Dorsolateral prefrontal cortex (tissue), 120 donors: ENCODE measurements at regions of chr7 and their contacts with region 1.

Region 1: GRCh38 chr7:105876091-105876963 is at the start of gene ATXN7L1:
- DNase-seq: peak; percentile 88 to 96 (median 92)
- H3K4me3 ChIP-seq: peak within 1 kb of the TSS; percentile 66 to 94 (median 85)
- H3K27ac ChIP-seq: peak within 1 kb of the TSS in 58 of 59 donors; percentile 19 to 94 (median 86)
- H3K27me3 ChIP-seq: no peaks in the 10 kb centered on the region
- CTCF ChIP-seq: peak in 46 of 56 donors; percentile 4 to 80 (median 48)
- total RNA-seq, gene ATXN7L1: 17.9 to 47.7 (median 29.0) TPM

Region 2: DNA sequence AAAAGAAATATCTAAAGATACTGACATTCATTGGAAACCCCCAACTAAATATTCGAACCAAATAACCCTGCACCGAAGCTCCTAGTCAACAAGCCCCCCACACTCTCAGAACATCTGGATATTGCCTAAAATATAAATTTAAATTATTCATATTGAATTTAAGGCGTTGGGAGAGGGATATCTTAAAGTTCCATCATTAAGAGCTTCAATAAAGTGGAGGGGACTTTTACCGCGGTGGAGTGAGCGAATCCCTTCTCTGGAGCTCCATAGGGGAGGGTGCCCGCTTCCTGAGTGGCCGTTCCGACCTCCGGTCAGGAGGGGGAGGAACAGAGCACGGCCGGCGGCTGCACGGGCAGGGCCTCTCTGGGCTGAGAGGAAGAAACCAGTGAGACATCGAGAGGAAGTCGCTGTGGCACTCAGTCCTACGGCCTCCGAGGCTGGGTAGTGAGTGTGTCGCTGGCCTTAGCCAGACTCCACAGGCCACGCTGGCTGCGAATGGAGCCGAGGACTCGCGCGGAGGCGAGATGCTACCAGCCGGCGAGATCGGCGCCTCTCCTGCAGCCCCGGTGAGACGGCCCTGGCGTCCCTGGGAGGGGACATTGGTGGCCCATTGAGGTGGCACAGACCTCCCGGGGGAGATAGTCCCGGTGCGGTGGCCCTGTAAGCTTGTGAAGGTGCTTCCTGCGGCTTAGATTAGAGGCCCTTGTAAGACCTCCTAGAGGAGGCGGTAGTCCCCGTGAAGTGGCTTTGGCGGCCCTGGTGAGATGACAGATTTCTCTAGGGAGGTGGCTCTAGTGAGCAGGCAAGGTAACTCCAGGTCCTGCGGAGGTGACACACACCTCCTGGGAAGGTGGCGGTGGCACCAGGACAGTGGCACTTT is 344.3 kb before region 1 on chr7 and contains the start of gene RINT1:
- intact Hi-C with region 1: no loop called
- DNase-seq: peak; percentile 76 to 94 (median 92)
- H3K4me3 ChIP-seq: peak within 1 kb of the TSS; percentile 67 to 100 (median 96)
- H3K27ac ChIP-seq: peak within 1 kb of the TSS in 54 of 59 donors; percentile 2 to 95 (median 82)
- H3K27me3 ChIP-seq: no peaks in the 10 kb centered on the region
- CTCF ChIP-seq: peak; percentile 24 to 97 (median 88)
- total RNA-seq, gene RINT1: 14.1 to 34.8 (median 22.7) TPM

Region 3: GRCh38 chr7:105652359-105652993 is 223.9 kb before region 1 on chr7:
- intact Hi-C with region 1: loop called (anchors 5 to 10 kb)
- DNase-seq: peak; percentile 78 to 86 (median 84)
- H3K4me3 ChIP-seq: no peak overlapping the region
- H3K27ac ChIP-seq: no peak overlapping the region
- H3K27me3 ChIP-seq: no peaks in the 10 kb centered on the region
- CTCF ChIP-seq: peak; percentile 51 to 96 (median 86)

Region 4: GRCh38 chr7:105759670-105760550 is 116.4 kb before region 1 on chr7:
- intact Hi-C with region 1: loop called in 1 of 2 experiments (anchors 5 kb)
- DNase-seq: peak in 6 of 10 donors; percentile 32 to 71 (median 49)
- H3K4me3 ChIP-seq: no peak overlapping the region
- H3K27ac ChIP-seq: no peak overlapping the region
- H3K27me3 ChIP-seq: no peaks in the 10 kb centered on the region
- CTCF ChIP-seq: peak in 55 of 56 donors; percentile 41 to 83 (median 66)

Region 5: DNA sequence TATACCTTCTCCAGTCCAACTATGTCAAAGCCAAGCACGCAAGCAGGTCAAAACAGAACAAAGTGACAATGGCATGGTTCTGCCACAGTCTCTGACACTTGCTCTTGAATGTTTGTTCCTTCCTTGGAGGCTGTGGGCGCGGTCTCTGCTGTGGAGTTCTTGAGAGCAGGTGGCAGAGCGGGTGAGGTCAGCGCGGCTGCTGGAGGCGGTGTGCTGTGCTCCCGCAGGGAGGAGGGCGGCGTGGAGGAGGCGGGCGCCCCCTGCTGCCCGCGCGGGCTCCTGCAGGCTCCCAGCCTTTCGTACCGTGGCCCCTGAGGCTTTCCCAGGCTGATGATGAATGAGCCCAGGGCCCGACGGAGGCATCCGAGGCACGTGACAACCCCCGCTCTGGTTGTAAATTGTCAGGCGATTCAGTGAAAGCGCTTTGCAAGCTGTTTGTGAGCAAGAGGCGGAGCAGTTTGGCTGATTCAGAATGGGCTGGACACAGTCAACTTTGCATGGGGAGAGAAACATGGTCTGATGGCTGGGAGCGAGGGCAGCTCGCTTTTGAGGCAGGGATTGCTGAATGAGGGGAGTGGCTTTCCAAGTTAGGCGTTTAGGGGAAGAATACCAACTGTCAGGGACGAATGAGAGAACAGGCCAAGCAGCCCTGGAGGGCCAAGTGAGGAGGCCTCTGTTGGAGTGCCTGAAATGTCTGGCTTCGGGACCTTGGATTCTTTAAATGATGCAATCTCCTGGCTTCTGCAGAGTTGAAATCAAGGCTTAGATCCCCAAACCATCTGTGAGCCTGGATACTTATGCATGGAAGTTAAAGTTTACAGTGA is 133.3 kb after region 1 on chr7:
- intact Hi-C with region 1: loop called (anchors 5 to 10 kb)
- DNase-seq: peak; percentile 72 to 89 (median 82)
- H3K4me3 ChIP-seq: peak overlapping the region in 37 of 59 donors; percentile 1 to 52 (median 29)
- H3K27ac ChIP-seq: peak overlapping the region in 2 of 59 donors; percentile 26 to 34
- H3K27me3 ChIP-seq: no peaks in the 10 kb centered on the region
- CTCF ChIP-seq: peak; percentile 71 to 99 (median 96)

Region 6: DNA sequence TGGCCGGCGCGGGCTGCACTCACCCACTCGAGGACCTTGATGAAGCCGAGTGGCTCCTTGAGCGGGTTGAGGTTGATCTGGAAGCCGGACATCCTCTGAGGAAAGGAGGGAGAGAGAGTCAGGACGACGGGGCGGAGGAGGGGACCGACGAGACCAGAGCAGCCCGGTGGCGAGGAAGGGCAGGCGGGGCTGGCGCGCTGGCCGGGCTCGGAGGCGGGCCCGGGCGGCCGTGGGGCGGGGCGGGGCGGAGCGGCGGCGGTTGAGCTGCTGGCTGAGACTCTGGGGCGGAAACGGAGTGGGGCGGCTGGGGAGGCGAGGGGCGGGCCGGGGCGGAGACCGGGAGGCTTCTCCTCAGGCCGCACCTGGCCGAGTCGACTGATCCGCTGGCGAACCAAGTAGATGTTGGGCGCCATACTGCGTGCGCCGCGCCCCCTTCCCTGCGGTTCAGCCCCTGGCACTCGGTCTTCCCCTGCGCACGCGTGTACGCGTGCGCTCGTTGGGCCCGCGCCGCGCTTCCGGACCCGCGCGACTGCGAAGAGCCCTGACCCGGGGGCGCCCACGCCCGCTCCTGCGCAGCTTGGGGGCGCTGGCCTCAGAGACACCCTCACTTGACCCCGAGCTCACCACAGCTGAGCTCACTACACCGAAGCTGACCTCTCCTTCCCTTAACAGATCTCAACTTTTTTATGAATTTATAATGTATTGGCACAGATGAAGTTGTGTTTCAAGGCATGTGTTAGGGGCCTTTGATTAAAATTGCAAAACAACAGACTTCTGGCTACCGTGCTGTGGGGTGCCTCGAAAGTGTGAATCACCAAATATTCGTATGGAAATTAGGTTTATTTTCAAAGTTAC is 236.0 kb after region 1 on chr7 and contains the start of gene SYPL1:
- intact Hi-C with region 1: loop called in 1 of 2 experiments (anchors 5 kb)
- DNase-seq: peak; percentile 66 to 92 (median 82)
- H3K4me3 ChIP-seq: peak within 1 kb of the TSS; percentile 59 to 93 (median 80)
- H3K27ac ChIP-seq: peak within 1 kb of the TSS; percentile 65 to 99 (median 95)
- H3K27me3 ChIP-seq: no peaks in the 10 kb centered on the region
- CTCF ChIP-seq: peak in 47 of 56 donors; percentile 7 to 65 (median 37)
- total RNA-seq, gene SYPL1: 21.3 to 84.1 (median 36.2) TPM

Region 7: GRCh38 chr7:106430094-106430493 is 553.8 kb after region 1 on chr7:
- intact Hi-C with region 1: no loop called
- DNase-seq: no peak
- H3K4me3 ChIP-seq: no peak overlapping the region
- H3K27ac ChIP-seq: no peak overlapping the region
- H3K27me3 ChIP-seq: no peaks in the 10 kb centered on the region
- CTCF ChIP-seq: no peak